Activated CD4-positive, alpha-beta T cell treated with anti-CD3 and anti-CD28 coated beads for 36 hours (primary cell): ENCODE measurements at regions of chr2 and their contacts with region 1.

Region 1: DNA sequence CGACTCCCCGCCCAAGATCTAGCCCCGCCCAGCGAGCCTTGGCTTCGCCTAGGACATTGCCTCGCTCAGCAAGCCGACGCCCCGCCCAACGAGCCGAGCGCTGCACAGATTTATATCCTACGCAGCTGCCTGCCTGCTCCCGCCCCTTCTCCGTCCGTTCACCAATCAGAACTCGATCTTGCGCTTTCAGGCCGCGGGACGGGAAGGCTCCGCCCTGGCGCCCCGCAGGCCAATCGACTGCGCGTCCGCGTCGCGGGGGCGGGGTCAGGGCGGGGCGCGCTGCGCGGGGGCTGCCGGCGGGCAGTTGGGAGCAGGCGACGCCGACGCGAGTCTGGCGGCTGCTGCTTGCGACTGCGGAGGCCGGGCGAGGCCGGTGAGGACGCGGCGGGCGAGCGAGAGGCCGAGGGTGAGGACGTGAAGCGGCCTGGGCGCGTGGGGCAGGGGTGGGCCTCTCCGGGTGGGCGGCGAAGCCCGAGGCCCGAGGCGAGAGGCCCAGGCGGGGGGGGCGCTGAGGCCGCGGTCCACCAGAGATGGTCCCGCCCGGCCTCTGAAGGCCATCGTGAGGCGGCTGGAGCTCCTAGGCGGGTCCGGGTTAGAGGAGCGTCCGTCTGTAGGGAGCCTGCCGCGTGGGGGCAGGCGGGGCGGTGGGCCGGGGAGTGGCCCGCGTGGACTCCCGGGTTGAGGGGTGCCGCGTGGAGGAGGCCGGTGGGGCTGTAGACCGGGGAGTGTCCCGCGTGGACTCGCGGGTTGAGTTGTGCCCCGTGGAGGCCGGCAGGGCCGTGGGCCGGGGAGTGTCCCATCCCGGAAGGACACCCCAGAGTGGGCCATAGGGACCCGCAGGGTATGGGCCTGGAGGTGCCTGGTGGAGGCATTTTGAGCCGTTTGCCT is at the start of gene FARP2:
- DNase-seq: peak; percentile 99
- ATAC-seq: peak; percentile 95
- H3K4me3 Mint-ChIP-seq: peak within 1 kb of the TSS; percentile 73
- H3K27ac Mint-ChIP-seq: peak within 1 kb of the TSS; percentile 80
- H3K4me1 Mint-ChIP-seq: peaks cover 48% of the 10 kb centered on the region
- H3K27me3 Mint-ChIP-seq: no peaks in the 10 kb centered on the region
- total RNA-seq, gene FARP2: 29.0 to 30.7 TPM

Region 2: GRCh38 chr2:240566203-240567136 is 789.8 kb before region 1 on chr2:
- CTCF ChIA-PET with region 1: no interaction called
- POLR2A ChIA-PET with region 1: no interaction called
- intact Hi-C with region 1: loop called (anchors 1 to 10 kb)
- DNase-seq: peak; percentile 98
- ATAC-seq: peak; percentile 67
- H3K4me3 Mint-ChIP-seq: peak overlapping the region; percentile 87
- H3K27ac Mint-ChIP-seq: peak overlapping the region; percentile 98
- H3K4me1 Mint-ChIP-seq: peaks cover 65% of the 10 kb centered on the region
- H3K27me3 Mint-ChIP-seq: no peaks in the 10 kb centered on the region

Region 3: GRCh38 chr2:241102239-241102803 is 253.9 kb before region 1 on chr2 and contains the start of gene MTERF4:
- CTCF ChIA-PET with region 1: no interaction called
- POLR2A ChIA-PET with region 1: no interaction called
- intact Hi-C with region 1: loop called in 1 of 2 experiments (anchors 5 kb)
- DNase-seq: peak; percentile 94
- ATAC-seq: peak; percentile 97
- H3K4me3 Mint-ChIP-seq: peak within 1 kb of the TSS; percentile 98
- H3K27ac Mint-ChIP-seq: peak within 1 kb of the TSS; percentile 99
- H3K4me1 Mint-ChIP-seq: peaks cover 48% of the 10 kb centered on the region
- H3K27me3 Mint-ChIP-seq: no peaks in the 10 kb centered on the region
- total RNA-seq, gene MTERF4: 34.4 to 34.5 TPM

Region 4: GRCh38 chr2:241508240-241509154 is 152.3 kb after region 1 on chr2 and contains the start of gene STK25:
- CTCF ChIA-PET with region 1: interaction called, 4 read pairs
- POLR2A ChIA-PET with region 1: no interaction called
- intact Hi-C with region 1: loop called (anchors 1 to 2 kb)
- DNase-seq: peak; percentile 99
- ATAC-seq: peak; percentile 96
- H3K4me3 Mint-ChIP-seq: peak within 1 kb of the TSS; percentile 79
- H3K27ac Mint-ChIP-seq: peak within 1 kb of the TSS; percentile 58
- H3K4me1 Mint-ChIP-seq: peaks cover 19% of the 10 kb centered on the region
- H3K27me3 Mint-ChIP-seq: peaks cover 3% of the 10 kb centered on the region
- total RNA-seq, gene STK25: 93.5 to 123 TPM

Region 5: DNA sequence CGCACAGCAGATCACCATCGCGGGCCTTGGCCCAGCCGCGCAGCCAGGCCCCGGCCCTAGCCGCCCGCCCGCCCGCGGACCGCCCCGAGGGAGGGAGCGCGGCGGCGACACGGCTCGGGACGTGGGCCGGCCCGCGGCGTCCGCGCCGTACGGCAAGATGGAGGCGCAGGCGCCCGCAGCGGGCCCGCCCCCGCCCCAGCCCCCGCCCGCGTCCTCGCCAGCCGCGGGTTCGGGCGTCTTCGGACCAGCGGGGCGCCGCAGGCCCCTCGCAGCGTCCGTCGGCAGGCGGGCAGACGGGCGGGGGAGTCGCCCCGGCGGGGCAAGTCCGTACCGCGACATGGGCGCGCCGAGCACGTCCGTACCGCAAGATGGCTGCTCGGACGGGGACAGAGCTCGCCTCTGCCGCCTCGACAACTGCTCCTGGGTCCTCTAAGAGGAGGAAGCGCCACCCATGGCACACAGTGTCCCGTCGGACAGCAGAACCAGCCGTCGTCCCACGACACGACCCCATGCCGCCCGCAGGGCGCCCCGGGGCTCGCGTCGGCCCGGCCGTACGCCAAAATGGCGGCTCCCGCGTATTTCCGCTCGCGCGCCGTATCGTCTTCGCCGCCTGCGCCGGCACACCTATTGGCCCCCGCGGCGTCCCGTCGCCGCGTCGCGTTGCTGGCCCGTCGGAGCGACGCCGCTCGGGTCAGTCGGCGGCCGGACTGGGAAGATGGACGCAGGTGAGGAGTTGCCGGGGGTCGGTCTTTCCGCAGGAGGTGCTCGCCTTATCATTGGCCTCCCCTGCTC is 281.0 kb after region 1 on chr2 and contains the starts of genes ATG4B and THAP4:
- CTCF ChIA-PET with region 1: no interaction called
- POLR2A ChIA-PET with region 1: no interaction called
- intact Hi-C with region 1: loop called in 1 of 2 experiments (anchors 1 kb)
- DNase-seq: peak; percentile 90
- ATAC-seq: peak; percentile 69
- H3K4me3 Mint-ChIP-seq: peak within 1 kb of the TSS; percentile 84
- H3K27ac Mint-ChIP-seq: peak within 1 kb of the TSS; percentile 96
- H3K4me1 Mint-ChIP-seq: peaks cover 50% of the 10 kb centered on the region
- H3K27me3 Mint-ChIP-seq: no peaks in the 10 kb centered on the region
- total RNA-seq, gene ATG4B: 71.8 to 80.1 TPM
- total RNA-seq, gene THAP4: 42.5 to 54.1 TPM

Region 6: DNA sequence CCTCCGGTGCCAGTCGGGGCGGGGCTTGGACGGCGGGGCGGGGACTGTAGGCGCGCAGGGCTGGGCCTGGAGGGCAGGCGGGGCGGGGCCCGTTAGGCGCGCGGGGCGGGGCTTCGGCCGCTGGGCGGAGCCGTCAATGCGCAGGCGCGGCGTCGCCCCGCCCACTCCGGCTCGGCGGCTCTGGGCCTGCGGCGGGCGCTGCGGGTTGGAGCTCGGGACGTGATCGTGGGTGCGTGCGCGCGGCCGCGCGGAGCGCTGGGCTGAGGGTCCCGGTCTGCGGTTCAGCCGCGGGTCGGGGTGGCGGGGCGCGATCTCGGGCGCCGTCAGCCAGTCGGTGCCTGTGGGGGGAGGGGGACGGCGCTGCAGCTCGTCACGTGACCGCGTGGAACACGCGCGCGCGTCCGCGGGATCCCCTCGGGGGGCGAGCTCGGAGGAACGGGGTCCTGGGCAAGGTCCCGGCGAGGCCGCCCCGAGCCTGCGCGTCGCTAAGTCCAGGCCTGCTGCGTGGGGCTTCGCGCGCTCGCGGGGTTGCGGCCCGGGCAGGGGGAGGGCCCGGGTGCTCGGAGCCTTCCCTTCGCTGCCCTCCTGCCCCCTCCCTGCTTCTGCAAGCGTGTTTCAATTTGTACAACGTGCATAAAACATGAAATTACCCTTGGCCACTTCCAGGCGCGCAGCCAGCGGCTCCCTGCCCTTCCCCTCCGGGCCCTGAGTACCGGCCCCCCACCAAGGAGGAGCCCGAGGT is 378.4 kb after region 1 on chr2 and contains the start of gene D2HGDH:
- CTCF ChIA-PET with region 1: interaction called, 3 read pairs
- POLR2A ChIA-PET with region 1: no interaction called
- intact Hi-C with region 1: loop called in 1 of 2 experiments (anchors 1 kb)
- DNase-seq: peak; percentile 98
- ATAC-seq: peak; percentile 92
- H3K4me3 Mint-ChIP-seq: peak within 1 kb of the TSS; percentile 79
- H3K27ac Mint-ChIP-seq: peak within 1 kb of the TSS; percentile 70
- H3K4me1 Mint-ChIP-seq: peaks cover 57% of the 10 kb centered on the region
- H3K27me3 Mint-ChIP-seq: no peaks in the 10 kb centered on the region
- total RNA-seq, gene D2HGDH: 18.2 to 34.1 TPM

Region 7: GRCh38 chr2:242088471-242089212 is 732.4 kb after region 1 on chr2:
- CTCF ChIA-PET with region 1: no interaction called
- POLR2A ChIA-PET with region 1: no interaction called
- intact Hi-C with region 1: loop called in 1 of 2 experiments (anchors 2 kb)
- DNase-seq: peak; percentile 95
- ATAC-seq: peak; percentile 96
- H3K4me3 Mint-ChIP-seq: peak overlapping the region; percentile 82
- H3K27ac Mint-ChIP-seq: peak overlapping the region; percentile 55
- H3K4me1 Mint-ChIP-seq: peaks cover 37% of the 10 kb centered on the region
- H3K27me3 Mint-ChIP-seq: peaks cover 3% of the 10 kb centered on the region